ENCODE measurements at regions of chr5 and their contacts with region 1.

Region 1: GRCh38 chr5:10627160-10627701 is 63.4 kb downstream of the ANKRD33B start:
- DNase-seq: peak in 1 of 2 donors; percentile 53
- H3K4me3 ChIP-seq: peak overlapping the region; percentile 23 to 25
- H3K27ac ChIP-seq: peak overlapping the region; percentile 82 to 85
- H3K4me1 ChIP-seq: peaks cover 5 to 7% of the 10 kb centered on the region in 2 donors
- H3K27me3 ChIP-seq: no peaks in the 10 kb centered on the region
- CTCF ChIP-seq: no peak
- POLR2A ChIP-seq: no peak

Region 2: DNA sequence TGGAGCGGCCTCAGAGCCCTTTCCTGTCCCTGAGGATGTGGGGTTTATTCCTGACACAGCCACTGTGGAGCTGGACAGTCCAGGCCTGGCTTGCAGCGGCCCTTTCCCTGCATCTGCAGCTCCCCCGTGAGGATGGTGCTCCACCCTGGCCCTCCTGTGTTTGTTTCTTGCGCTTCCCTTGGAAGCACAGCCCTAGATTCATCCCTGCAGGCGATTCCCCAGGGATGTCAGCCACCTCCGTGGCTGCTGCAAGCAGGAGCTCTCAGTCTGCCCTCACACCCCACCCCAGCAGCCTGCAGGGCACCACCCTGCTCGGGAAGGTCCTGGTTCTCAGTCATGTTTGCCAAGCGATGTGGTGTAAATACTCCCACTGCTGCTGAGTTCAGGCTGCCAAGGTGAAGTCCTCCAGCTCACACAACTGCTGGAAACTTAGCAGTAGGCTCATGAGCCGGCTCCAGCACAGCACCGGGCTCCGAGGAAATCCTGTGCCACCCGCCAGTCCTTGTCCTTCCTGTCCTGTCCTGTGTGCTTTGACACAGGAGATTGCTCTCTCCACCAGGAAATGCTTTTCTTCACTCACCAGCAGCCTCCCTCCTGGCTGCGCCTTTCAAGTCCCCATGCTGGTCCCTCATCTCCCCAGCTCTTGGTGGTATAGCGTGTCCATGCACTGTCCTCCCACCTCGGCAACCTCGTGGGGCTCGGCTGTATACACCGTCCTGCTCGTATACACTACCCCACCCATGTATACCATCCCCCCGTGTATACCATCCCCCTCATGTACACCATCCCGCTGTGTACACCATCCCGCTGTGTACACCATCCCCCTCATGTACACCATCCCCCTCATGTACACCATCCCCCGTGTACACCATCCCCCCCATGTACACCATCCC is 169.3 kb before region 1 on chr5:
- intact Hi-C with region 1: loop called (anchors 5 kb)
- DNase-seq: peak; percentile 41 to 51
- H3K4me3 ChIP-seq: no peak overlapping the region
- H3K27ac ChIP-seq: peak overlapping the region in 1 of 2 donors; percentile 40
- H3K4me1 ChIP-seq: no peaks in the 10 kb centered on the region
- H3K27me3 ChIP-seq: no peaks in the 10 kb centered on the region
- CTCF ChIP-seq: peak in 1 of 4 experiments; percentile 27
- POLR2A ChIP-seq: no peak